Esophagus squamous epithelium (tissue), 5 donors: ENCODE measurements at regions of chr4 and their contacts with region 1.

Region 1: GRCh38 chr4:86934771-86935565 is at the start of gene AFF1:
- DNase-seq: peak; percentile 60
- H3K4me3 ChIP-seq: peak within 1 kb of the TSS; percentile 81 to 98 (median 90)
- H3K27ac ChIP-seq: peak within 1 kb of the TSS; percentile 97 to 99 (median 98)
- H3K4me1 ChIP-seq: peaks cover 24 to 50% (median 28%) of the 10 kb centered on the region in 3 donors
- H3K27me3 ChIP-seq: no peaks in the 10 kb centered on the region
- CTCF ChIP-seq: peak; percentile 53 to 76 (median 60)
- POLR2A ChIP-seq: peak in 3 of 4 donors; percentile 41 to 99 (median 75)
- total RNA-seq, gene AFF1: 22.9 to 47.1 (median 34.0) TPM

Region 2: DNA sequence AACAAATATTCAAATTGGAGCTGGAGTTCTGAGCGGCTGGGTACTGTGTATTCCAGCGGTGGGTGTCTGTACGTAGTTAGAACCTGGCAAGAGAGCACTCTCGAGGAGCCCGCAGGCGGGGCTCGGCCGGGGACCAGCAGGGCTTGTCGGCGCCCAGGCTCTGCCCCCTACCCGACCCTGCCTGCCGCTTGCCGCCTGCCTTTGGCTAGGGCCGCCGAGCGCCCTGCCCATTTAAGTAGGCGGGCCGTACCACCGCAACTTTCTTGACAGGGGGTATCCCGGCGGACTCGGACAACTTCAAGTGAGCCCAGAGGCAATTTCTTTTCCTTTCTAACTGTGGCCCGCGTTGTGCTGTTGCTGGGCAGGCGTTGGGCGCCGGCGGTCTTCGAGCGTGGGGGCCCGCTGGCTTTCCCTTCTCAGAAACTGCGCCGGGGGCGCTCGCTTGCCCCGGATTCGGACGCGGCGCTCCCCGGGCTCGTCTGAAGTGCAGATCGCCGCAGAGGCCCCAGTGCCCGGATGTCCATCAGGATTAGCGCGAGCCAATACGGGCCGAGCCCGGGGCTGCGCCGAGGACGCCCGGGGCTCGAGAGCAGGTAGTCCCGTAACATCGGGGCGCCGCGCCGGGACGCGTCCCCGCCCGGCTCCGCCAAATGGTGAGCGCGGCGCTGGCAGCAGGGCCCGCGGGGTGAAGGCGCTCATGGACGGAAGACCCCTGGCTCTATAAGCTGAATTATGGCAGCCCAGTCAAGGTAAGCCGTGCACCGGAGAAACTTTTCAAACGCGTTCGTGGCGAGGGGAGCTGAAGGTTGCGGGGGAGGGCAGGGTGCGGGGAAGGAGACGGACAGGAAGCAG is 71.9 kb after region 1 on chr4:
- intact Hi-C with region 1: loop called (anchors 2 kb)
- DNase-seq: peak; percentile 71
- H3K4me3 ChIP-seq: peak overlapping the region; percentile 71 to 94 (median 78)
- H3K27ac ChIP-seq: peak overlapping the region; percentile 96 to 98 (median 97)
- H3K4me1 ChIP-seq: peaks cover 28 to 58% (median 41%) of the 10 kb centered on the region in 3 donors
- H3K27me3 ChIP-seq: no peaks in the 10 kb centered on the region
- CTCF ChIP-seq: peak in 4 of 6 experiments; percentile 9 to 47 (median 42)
- POLR2A ChIP-seq: peak in 3 of 4 donors; percentile 2 to 98 (median 91)

Region 3: GRCh38 chr4:87026800-87027495 is 92.0 kb after region 1 on chr4:
- intact Hi-C with region 1: no loop called
- DNase-seq: no peak
- H3K4me3 ChIP-seq: no peak overlapping the region
- H3K27ac ChIP-seq: peak overlapping the region in 3 of 4 donors; percentile 36 to 41 (median 39)
- H3K4me1 ChIP-seq: peaks cover 41 to 93% (median 47%) of the 10 kb centered on the region in 3 donors
- H3K27me3 ChIP-seq: no peaks in the 10 kb centered on the region
- CTCF ChIP-seq: no peak
- POLR2A ChIP-seq: no peak